ENCODE measurements at regions of chr1 and their contacts with region 1.

Region 1: DNA sequence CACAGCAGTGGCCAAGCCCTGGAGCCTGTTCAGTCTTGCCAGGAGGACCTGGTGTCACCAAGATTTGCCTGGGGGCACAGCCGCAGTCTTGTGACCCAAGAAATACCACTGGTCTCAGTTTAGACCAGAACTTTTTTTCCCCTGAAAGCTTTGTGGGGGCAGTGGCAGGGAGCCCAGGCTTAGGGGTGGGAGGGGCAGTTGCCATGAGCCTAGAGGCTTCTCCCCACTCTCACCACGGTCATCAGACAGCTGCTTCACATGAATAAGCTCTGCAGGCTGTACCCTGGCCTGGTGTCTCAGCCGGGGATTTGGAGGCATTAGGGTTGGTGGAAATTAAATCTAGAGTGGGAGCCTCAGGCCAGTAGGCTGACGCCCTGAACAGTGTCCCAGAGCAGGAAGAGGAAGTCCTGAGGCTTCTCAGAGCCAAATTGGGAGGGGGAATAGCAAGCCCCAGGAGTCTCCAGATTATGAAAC is 73.7 kb downstream of the SLC16A1 start:
- DNase-seq: peak in 1 of 2 donors; percentile 18
- ATAC-seq: no peak
- H3K4me3 ChIP-seq: no peak overlapping the region
- H3K27ac ChIP-seq: no peak overlapping the region
- H3K4me1 ChIP-seq: no peaks in the 10 kb centered on the region
- H3K27me3 ChIP-seq: no peaks in the 10 kb centered on the region
- CTCF ChIP-seq: no peak
- POLR2A ChIP-seq: no peak

Region 2: GRCh38 chr1:111801071-111801841 is 1081.1 kb before region 1 on chr1:
- in situ Hi-C with region 1: no loop called
- intact Hi-C with region 1: loop called (anchors 10 kb)
- DNase-seq: no peak
- ATAC-seq: peak; percentile 82 to 86
- H3K4me3 ChIP-seq: no peak overlapping the region
- H3K27ac ChIP-seq: peak overlapping the region in 1 of 4 donors; percentile 49
- H3K4me1 ChIP-seq: peaks cover 0 to 3% of the 10 kb centered on the region in 2 donors
- H3K27me3 ChIP-seq: no peaks in the 10 kb centered on the region
- CTCF ChIP-seq: peak; percentile 13 to 46 (median 30)
- POLR2A ChIP-seq: no peak

Region 3: DNA sequence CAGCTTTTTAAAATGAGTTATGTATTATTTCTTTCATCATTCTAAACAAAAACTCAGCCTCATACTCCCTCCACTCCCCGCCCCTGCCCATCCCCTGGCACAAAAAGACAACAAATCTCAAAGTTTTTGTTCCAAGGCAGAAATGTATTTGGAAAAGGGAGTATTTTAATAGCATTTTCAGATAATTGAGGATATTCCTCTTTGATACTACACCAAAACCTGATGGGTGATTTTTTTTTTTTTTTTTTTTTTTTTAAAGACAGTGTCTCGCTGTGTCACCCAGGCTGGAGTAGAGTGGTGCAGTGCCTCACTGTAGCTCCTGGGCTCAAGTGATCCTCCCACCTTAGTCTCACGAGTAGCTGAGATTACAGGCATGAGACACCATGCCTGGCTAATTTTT is 57.5 kb after region 1 on chr1:
- in situ Hi-C with region 1: loop called in 1 of 4 experiments (anchors 10 kb)
- intact Hi-C with region 1: no loop called
- DNase-seq: no peak
- ATAC-seq: no peak
- H3K4me3 ChIP-seq: no peak overlapping the region
- H3K27ac ChIP-seq: peak overlapping the region in 2 of 4 donors; percentile 33 to 70
- H3K4me1 ChIP-seq: peaks cover 27 to 36% of the 10 kb centered on the region in 2 donors
- H3K27me3 ChIP-seq: no peaks in the 10 kb centered on the region
- CTCF ChIP-seq: no peak
- POLR2A ChIP-seq: no peak

Region 4: DNA sequence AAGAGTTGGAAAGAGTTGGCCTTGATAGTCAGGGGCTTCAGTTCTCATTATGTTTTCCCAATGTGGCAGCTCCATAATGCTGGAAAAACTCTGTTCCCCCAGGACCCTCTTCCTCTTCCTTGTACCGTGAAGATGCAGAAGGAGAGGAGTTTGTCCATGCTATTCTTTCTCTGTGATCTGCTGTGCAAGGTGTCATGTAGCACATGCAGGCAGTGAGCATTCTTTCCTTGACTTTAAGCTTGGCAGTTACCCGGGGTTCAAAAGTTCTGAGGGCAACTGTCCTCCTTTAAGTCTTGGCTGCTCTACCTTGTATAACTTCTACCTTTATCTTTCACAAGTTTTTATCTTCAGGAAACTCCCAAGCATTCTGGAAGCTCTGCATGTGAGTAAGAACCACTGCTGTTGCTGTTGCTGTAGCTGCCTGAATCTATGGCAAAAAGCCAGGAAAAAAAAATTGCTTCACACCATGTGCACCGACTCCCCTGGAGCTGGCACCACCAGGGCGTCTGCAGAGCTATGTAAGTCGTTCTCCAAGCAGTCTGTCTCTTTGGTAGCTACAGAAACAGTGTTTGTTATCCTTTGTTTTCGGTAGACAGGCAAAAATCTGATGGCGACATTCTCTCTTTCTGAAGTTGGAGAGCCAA is 116.4 kb after region 1 on chr1:
- in situ Hi-C with region 1: no loop called
- intact Hi-C with region 1: no loop called
- DNase-seq: peak; percentile 52 to 79
- ATAC-seq: peak; percentile 63 to 78
- H3K4me3 ChIP-seq: no peak overlapping the region
- H3K27ac ChIP-seq: peak overlapping the region; percentile 91 to 94 (median 94)
- H3K4me1 ChIP-seq: peaks cover 51 to 67% of the 10 kb centered on the region in 2 donors
- H3K27me3 ChIP-seq: no peaks in the 10 kb centered on the region
- CTCF ChIP-seq: no peak
- POLR2A ChIP-seq: no peak

Region 5: GRCh38 chr1:113042285-113043143 is 160.2 kb after region 1 on chr1:
- in situ Hi-C with region 1: loop called (anchors 5 kb)
- intact Hi-C with region 1: loop called (anchors 1 kb)
- DNase-seq: peak; percentile 42 to 66
- ATAC-seq: peak; percentile 90 to 92
- H3K4me3 ChIP-seq: no peak overlapping the region
- H3K27ac ChIP-seq: no peak overlapping the region
- H3K4me1 ChIP-seq: peaks cover 0 to 7% of the 10 kb centered on the region in 2 donors
- H3K27me3 ChIP-seq: no peaks in the 10 kb centered on the region
- CTCF ChIP-seq: peak; percentile 67 to 78 (median 73)
- POLR2A ChIP-seq: no peak